WTC11 (cell line): ENCODE measurements at regions of chr12 and their contacts with region 1.

Region 1: DNA sequence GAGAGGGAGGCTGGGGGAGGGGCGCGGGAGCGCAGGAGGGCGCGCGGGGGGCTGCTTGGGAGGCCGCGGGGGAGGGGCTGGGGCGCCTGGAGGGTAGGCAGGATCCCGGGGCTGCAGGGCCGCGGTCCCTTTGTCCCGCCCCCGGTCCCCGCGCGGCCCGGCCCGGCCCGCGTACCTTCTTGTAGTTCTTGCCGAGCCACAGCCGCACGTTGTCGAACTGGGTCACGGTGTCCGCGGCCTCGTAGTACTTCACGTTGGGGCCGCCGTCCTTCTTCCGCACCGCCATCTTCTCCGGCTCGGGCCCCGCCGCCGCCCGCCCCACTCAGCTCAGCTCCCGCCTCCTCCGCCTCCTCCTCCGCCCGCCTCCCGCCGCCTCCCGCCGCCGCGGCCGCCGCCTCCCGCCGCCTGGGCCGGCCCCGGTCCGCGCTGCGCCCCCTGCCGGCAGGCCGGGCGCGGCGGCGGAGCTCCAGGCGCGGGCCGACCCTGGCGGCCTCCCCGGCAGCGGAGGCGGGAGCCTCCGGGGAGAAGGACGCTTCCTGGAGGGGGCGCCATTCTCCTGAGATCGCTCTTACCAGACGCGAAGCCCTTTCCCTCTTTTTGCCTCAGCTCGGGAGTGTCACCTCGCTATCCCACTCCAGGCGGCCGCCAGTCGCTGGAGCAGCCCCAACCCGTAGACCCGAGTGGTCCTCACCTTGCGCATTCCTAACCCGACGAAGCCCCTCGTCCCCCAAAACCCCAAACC is at the start of gene SMARCC2:
- DNase-seq: peak; percentile 92
- ATAC-seq: peak; percentile 81
- H3K4me3 Mint-ChIP-seq: peak within 1 kb of the TSS; percentile 99
- H3K27ac Mint-ChIP-seq: peak within 1 kb of the TSS; percentile 96
- H3K4me1 Mint-ChIP-seq: peaks cover 30% of the 10 kb centered on the region
- H3K27me3 Mint-ChIP-seq: peaks cover 3% of the 10 kb centered on the region; the same call in 1 of the 2 replicates
- CTCF ChIP-seq: no peak; the same call in 1 of the 2 replicates
- total RNA-seq, gene SMARCC2: 72.8 to 77.9 TPM (median 76.8 TPM) in 3 replicates

Region 2: DNA sequence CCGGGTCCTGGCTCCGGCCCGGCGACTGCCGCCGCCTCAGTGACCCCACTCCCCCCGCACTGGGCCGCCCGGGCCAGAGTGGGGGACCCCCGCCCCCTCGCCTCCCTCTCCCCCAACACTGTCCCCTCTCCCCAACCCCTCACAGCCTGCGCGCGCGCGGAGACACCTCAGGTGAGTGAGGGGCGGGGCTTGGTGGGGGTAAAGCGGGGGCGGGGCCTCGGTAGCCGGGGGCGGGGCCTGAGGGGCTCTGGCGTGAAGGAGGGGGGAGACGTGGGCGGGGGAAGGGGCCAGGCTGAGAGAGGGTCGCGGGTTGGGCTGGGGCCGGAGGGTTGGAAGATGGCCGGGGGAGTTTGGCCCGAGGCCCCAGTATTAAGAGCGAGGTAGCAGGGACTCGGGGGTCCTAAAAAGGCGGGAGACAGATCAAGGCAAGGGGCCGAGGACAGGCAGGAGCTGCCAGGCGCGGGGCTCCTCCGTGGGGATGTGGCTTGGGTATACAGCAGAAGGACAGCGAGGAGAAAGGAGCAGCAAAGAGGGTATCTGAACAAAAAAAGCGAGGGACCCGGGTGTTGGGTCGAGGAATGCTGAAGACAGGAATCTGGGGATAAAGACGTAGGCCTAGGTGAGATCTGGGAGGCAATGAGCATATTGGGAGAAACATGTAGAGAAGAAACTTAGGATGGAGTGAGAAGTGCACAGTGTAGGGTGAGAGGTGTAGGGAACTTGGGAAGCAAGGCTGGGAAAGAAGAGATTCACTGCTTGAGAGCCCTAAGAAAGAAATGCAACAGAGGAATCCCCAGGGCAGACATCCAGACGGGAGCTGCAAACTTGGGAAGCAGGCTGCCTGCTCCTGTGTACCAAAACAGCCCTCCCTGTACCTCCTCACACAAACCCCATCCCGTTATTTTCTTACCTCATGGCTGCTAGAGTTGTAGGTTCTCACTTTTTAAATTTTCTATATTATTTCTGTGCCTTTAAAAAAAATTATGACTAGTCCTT is 181.5 kb before region 1 on chr12:
- CTCF ChIA-PET with region 1: no interaction called
- POLR2A ChIA-PET with region 1: no interaction called
- DNase-seq: peak; percentile 86
- ATAC-seq: peak; percentile 91
- H3K4me3 Mint-ChIP-seq: peak overlapping the region; percentile 84
- H3K27ac Mint-ChIP-seq: peak overlapping the region; percentile 82
- H3K4me1 Mint-ChIP-seq: peaks cover 19% of the 10 kb centered on the region
- H3K27me3 Mint-ChIP-seq: no peaks in the 10 kb centered on the region; the same call in 1 of the 2 replicates
- CTCF ChIP-seq: no peak

Region 3: GRCh38 chr12:56078990-56079664 is 110.2 kb before region 1 on chr12:
- CTCF ChIA-PET with region 1: interaction called, 6 read pairs
- POLR2A ChIA-PET with region 1: interaction called, 10 read pairs
- DNase-seq: peak; percentile 96
- ATAC-seq: peak; percentile 68
- H3K4me3 Mint-ChIP-seq: peak overlapping the region; percentile 89
- H3K27ac Mint-ChIP-seq: peak overlapping the region; percentile 98
- H3K4me1 Mint-ChIP-seq: peaks cover 23% of the 10 kb centered on the region
- H3K27me3 Mint-ChIP-seq: no peaks in the 10 kb centered on the region
- CTCF ChIP-seq: peak; percentile 46; the same call in 1 of the 2 replicates

Region 4: GRCh38 chr12:56127888-56128669 is 61.3 kb before region 1 on chr12 and contains the start of gene ESYT1:
- CTCF ChIA-PET with region 1: interaction called, 61 read pairs
- POLR2A ChIA-PET with region 1: interaction called, 29 read pairs
- DNase-seq: peak; percentile 99
- ATAC-seq: peak; percentile 95
- H3K4me3 Mint-ChIP-seq: peak within 1 kb of the TSS; percentile 98
- H3K27ac Mint-ChIP-seq: peak within 1 kb of the TSS; percentile 99
- H3K4me1 Mint-ChIP-seq: peaks cover 30% of the 10 kb centered on the region
- H3K27me3 Mint-ChIP-seq: no peaks in the 10 kb centered on the region; the same call in 1 of the 2 replicates
- CTCF ChIP-seq: no peak
- total RNA-seq, gene ESYT1: 77.7 to 80.8 TPM (median 80.1 TPM) in 3 replicates

Region 5: GRCh38 chr12:56165369-56165768 is 24.0 kb before region 1 on chr12:
- CTCF ChIA-PET with region 1: interaction called, 21 read pairs
- POLR2A ChIA-PET with region 1: interaction called, 25 read pairs
- DNase-seq: no peak
- ATAC-seq: no peak
- H3K4me3 Mint-ChIP-seq: no peak overlapping the region
- H3K27ac Mint-ChIP-seq: no peak overlapping the region
- H3K4me1 Mint-ChIP-seq: peaks cover 27% of the 10 kb centered on the region
- H3K27me3 Mint-ChIP-seq: no peaks in the 10 kb centered on the region
- CTCF ChIP-seq: no peak

Region 6: GRCh38 chr12:56258057-56258819 is 68.9 kb after region 1 on chr12 and contains the start of gene ANKRD52:
- CTCF ChIA-PET with region 1: interaction called, 38 read pairs
- POLR2A ChIA-PET with region 1: interaction called, 3 read pairs
- DNase-seq: peak; percentile 76
- ATAC-seq: peak; percentile 74
- H3K4me3 Mint-ChIP-seq: peak within 1 kb of the TSS; percentile 95
- H3K27ac Mint-ChIP-seq: peak within 1 kb of the TSS; percentile 92
- H3K4me1 Mint-ChIP-seq: peaks cover 18% of the 10 kb centered on the region
- H3K27me3 Mint-ChIP-seq: 0 out of 2 replicates have a peak, but pooled peaks cover 4% of the 10 kb centered on the region
- CTCF ChIP-seq: peak; percentile 61
- total RNA-seq, gene ANKRD52: 33.0 to 41.2 TPM (median 38.6 TPM) in 3 replicates

Region 7: GRCh38 chr12:56359851-56360767 is 170.8 kb after region 1 on chr12 and contains the start of gene STAT2:
- CTCF ChIA-PET with region 1: interaction called, 15 read pairs
- POLR2A ChIA-PET with region 1: interaction called, 3 read pairs
- DNase-seq: peak; percentile 100
- ATAC-seq: peak; percentile 98
- H3K4me3 Mint-ChIP-seq: peak within 1 kb of the TSS; percentile 90
- H3K27ac Mint-ChIP-seq: peak within 1 kb of the TSS; percentile 99
- H3K4me1 Mint-ChIP-seq: peaks cover 13% of the 10 kb centered on the region
- H3K27me3 Mint-ChIP-seq: peaks cover 9% of the 10 kb centered on the region; the same call in 1 of the 2 replicates
- CTCF ChIP-seq: no peak
- total RNA-seq, gene STAT2: 53.2 to 54.5 TPM (median 54.5 TPM) in 3 replicates